SK-N-SH (cell line): ENCODE measurements at regions of chr12 and their contacts with region 1.

Region 1: DNA sequence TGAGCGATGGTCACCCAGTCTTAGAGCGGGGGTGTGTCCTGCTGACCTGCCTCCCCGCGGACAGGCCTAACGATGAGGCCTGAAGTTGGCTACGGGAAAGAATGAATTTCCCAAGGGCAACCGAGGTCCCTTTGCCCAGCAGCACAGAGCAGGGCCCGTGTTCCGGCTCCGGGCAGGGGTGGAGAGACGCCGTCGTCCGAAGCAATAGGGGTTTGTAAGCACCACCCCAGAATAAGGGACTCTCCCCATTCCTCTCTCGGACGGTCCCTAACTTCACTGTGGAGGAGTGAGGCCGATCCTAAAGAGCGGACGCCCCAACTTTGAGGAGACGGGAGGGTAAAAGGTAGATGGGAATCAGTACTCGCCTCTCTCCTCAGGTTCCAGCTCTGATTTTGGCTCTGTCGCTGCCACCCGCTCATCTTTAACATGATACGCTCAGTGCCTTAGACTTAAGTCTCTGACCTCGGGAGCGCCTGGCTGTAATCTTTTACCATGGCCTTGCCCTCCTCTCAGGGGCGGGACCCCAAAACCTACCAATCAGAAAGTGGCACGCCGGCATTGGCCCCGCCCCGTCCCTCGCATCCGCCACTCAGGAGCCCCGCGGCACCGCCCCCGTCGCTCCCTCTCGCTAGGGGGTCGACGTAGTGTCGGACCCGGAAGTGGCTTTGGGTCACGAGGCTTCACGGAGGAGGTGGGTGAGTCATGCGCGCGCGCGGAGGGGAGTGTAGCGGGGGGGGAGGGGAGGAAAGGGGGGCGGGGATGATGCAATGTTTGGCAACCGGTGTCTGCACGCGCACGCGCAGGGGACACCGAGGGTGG is at the start of gene DDIT3:
- DNase-seq: peak; percentile 94
- H3K4me3 ChIP-seq: peak within 1 kb of the TSS; percentile 72 to 94
- H3K27ac ChIP-seq: peak within 1 kb of the TSS; percentile 97 to 98
- H3K4me1 ChIP-seq: peaks cover 41 to 46% of the 10 kb centered on the region in 2 experiments
- H3K27me3 ChIP-seq: no peaks in the 10 kb centered on the region
- CTCF ChIP-seq: no peak
- EP300 ChIP-seq: peak in 1 of 2 experiments; percentile 58; a peak in 1 of 4 replicates
- RAD21 ChIP-seq: no peak
- polyA plus RNA-seq, gene DDIT3: 26.3 and 36.5 TPM in 2 replicates

Region 2: DNA sequence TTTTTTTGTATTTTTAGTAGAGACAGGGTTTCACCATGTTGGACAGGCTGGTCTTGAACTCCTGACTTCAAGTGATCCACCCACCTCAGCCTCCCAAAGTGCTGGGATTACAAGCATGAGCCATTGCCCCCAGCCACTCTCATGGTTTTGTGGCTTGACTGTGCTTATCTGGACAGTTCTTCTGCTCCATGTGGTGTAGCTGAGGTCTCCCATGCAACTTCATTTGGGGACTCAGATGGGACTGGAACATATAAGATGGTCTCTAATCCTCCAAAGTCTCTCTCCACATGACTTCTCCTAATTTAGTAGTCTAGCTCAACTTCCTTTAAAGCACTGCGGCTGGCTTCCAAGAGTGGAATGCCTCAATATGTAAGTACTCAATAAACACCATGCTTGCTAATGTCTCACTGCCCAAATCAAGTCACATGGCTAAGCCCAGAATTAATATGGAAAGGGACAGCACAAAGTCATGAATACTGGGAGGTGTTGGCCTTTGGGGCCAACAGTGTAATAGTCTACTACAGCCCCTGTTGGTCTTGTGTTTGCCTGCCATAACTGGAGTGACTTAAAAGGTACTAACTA is 78.3 kb before region 1 on chr12:
- CTCF ChIA-PET with region 1: no interaction called
- POLR2A ChIA-PET with region 1: no interaction called
- DNase-seq: no peak
- H3K4me3 ChIP-seq: no peak overlapping the region
- H3K27ac ChIP-seq: no peak overlapping the region
- H3K4me1 ChIP-seq: no peaks in the 10 kb centered on the region
- H3K27me3 ChIP-seq: no peaks in the 10 kb centered on the region
- CTCF ChIP-seq: no peak
- EP300 ChIP-seq: no peak
- RAD21 ChIP-seq: no peak

Region 3: GRCh38 chr12:57498132-57498502 is 22.1 kb before region 1 on chr12:
- CTCF ChIA-PET with region 1: interaction called, 5 read pairs
- POLR2A ChIA-PET with region 1: interaction called, 10 read pairs
- DNase-seq: no peak
- H3K4me3 ChIP-seq: no peak overlapping the region
- H3K27ac ChIP-seq: no peak overlapping the region
- H3K4me1 ChIP-seq: no peaks in the 10 kb centered on the region
- H3K27me3 ChIP-seq: no peaks in the 10 kb centered on the region
- CTCF ChIP-seq: no peak
- EP300 ChIP-seq: no peak
- RAD21 ChIP-seq: no peak

Region 4: GRCh38 chr12:57534991-57535543 is 14.8 kb after region 1 on chr12:
- CTCF ChIA-PET with region 1: interaction called, 9 read pairs
- POLR2A ChIA-PET with region 1: interaction called, 11 read pairs
- DNase-seq: no peak
- H3K4me3 ChIP-seq: no peak overlapping the region
- H3K27ac ChIP-seq: no peak overlapping the region
- H3K4me1 ChIP-seq: no peaks in the 10 kb centered on the region
- H3K27me3 ChIP-seq: no peaks in the 10 kb centered on the region
- CTCF ChIP-seq: no peak
- EP300 ChIP-seq: no peak
- RAD21 ChIP-seq: no peak

Region 5: GRCh38 chr12:57546438-57547383 is 26.4 kb after region 1 on chr12 and contains the start of gene DCTN2:
- CTCF ChIA-PET with region 1: interaction called, 7 read pairs
- POLR2A ChIA-PET with region 1: interaction called, 13 read pairs
- DNase-seq: peak; percentile 97
- H3K4me3 ChIP-seq: peak within 1 kb of the TSS; percentile 84 to 86
- H3K27ac ChIP-seq: peak within 1 kb of the TSS; percentile 55 to 67; a peak in 3 of 4 replicates
- H3K4me1 ChIP-seq: peaks cover 16 to 23% of the 10 kb centered on the region in 2 experiments
- H3K27me3 ChIP-seq: no peaks in the 10 kb centered on the region
- CTCF ChIP-seq: peak; percentile 25
- EP300 ChIP-seq: no peak
- RAD21 ChIP-seq: peak; percentile 24
- polyA plus RNA-seq, gene DCTN2: 122 and 139 TPM in 2 replicates